Activated CD4-positive, alpha-beta T cell treated with anti-CD3 and anti-CD28 coated beads, Interleukin-2, amount 10 ng/mL, durations not matched to agents 24 days and 14 days (primary cell): ENCODE measurements at regions of chr12 and their contacts with region 1.

Region 1: DNA sequence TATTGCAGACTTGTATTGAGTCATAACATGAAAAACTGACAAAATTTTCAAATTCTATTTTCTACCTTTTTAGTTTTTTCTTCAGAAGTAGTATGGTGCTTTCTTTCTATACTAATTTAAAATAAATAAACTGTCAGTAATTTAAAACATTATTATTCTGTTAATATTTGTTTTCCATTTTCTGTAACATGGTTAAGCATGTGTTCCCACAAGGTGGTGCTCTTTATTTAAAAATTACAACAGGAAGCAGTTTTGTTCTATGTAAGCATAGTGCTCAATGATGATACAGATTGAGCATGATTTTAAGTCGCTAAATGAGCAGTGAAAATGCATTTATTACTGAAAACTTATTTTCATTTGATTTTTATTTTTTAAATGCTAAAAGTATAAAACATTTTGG is 114.6 kb downstream of the PPFIA2 start:
- DNase-seq: no peak
- H3K4me3 Mint-ChIP-seq: no peak overlapping the region
- H3K27ac Mint-ChIP-seq: no peak overlapping the region
- H3K4me1 Mint-ChIP-seq: no peaks in the 10 kb centered on the region
- H3K27me3 Mint-ChIP-seq: no peaks in the 10 kb centered on the region

Region 2: DNA sequence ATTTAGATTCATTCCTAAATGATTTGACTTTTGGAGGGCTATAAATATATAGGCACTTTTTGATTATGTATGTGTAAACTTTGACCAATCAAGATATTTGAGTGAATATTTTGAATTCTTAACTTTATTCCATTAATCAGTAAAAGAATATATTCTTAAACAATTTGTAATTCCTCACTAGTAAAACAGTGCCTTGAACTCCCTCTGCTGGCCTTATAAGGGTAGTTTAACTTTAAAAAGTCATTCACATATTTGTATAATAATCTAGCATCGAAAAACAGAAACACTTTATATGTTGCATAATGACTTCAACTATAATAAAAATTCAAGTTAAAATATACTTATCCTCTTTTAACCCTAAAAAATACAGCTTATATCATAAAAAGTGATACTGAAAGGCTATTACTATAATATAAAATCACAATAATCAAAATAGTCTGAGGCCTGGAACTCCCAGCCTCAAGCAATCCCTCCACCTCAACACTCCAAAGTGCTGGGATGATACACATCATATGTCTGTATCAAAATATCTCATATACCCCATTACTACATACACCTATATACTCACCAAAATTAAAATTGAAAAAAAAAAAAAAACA is 682.5 kb after region 1 on chr12:
- intact Hi-C with region 1: loop called (anchors 2 kb)
- DNase-seq: no peak
- H3K4me3 Mint-ChIP-seq: no peak overlapping the region
- H3K27ac Mint-ChIP-seq: no peak overlapping the region
- H3K4me1 Mint-ChIP-seq: no peaks in the 10 kb centered on the region
- H3K27me3 Mint-ChIP-seq: no peaks in the 10 kb centered on the region

Region 3: GRCh38 chr12:82358200-82359114 is 714.0 kb after region 1 on chr12 and contains the starts of genes CCDC59 and METTL25:
- intact Hi-C with region 1: loop called (anchors 1 kb)
- DNase-seq: peak; percentile 98
- H3K4me3 Mint-ChIP-seq: peak within 1 kb of the TSS; percentile 97
- H3K27ac Mint-ChIP-seq: peak within 1 kb of the TSS; percentile 100
- H3K4me1 Mint-ChIP-seq: peaks cover 35% of the 10 kb centered on the region
- H3K27me3 Mint-ChIP-seq: no peaks in the 10 kb centered on the region
- total RNA-seq, gene CCDC59: 101 and 102 TPM in 2 replicates
- total RNA-seq, gene METTL25: 6.3 and 7.8 TPM in 2 replicates